ENCODE measurements at regions of chr19 and their contacts with region 1.

Region 1: DNA sequence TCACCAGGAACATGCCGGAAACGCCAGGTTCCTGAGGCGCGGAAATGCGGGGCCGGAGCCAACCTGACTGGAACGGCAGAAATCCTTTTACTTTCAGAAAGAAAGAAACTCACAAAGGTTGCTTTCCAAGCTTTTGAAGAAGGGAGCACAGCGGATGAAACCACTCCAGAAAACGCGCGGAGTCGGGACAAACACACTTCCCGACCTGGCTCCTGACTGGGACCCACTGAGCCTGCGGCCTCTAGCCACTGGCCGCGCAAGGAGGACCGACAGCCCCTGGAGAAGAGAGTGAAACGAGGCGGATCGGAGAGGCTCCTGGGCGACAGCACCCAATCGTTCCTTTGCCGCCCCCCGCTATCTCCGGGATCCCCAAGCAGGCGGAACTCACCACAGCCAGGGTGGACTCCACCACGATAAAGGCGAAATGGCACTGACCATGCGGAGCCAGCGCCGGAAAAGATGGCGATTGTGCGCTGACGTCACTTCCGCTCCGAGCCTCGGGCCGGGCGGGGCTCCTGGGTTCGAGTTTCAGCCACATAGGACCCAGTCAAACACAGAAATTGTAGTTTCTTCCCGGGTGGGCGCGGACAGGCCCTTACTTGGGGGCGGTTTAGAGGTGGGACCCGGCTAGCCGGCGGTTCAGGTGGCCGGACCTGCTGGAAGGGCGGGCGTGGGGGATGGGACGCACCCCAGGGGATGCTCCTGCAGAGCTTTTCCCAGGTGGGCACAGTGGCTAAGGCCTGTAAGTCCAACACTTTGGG is at the start of gene ZNF121:
- DNase-seq: peak; percentile 59 to 63
- ATAC-seq: peak; percentile 95 to 98
- H3K4me3 ChIP-seq: peak within 1 kb of the TSS; percentile 67 to 93 (median 82)
- H3K27ac ChIP-seq: peak within 1 kb of the TSS; percentile 82 to 93 (median 90)
- H3K4me1 ChIP-seq: peaks cover 8 to 10% of the 10 kb centered on the region in 2 donors
- H3K27me3 ChIP-seq: peaks cover 0 to 11% (median 0%) of the 10 kb centered on the region in 3 donors
- CTCF ChIP-seq: no peak
- POLR2A ChIP-seq: peak; percentile 41 to 49
- total RNA-seq, gene ZNF121: 11.2 to 21.9 (median 14.6) TPM

Region 2: DNA sequence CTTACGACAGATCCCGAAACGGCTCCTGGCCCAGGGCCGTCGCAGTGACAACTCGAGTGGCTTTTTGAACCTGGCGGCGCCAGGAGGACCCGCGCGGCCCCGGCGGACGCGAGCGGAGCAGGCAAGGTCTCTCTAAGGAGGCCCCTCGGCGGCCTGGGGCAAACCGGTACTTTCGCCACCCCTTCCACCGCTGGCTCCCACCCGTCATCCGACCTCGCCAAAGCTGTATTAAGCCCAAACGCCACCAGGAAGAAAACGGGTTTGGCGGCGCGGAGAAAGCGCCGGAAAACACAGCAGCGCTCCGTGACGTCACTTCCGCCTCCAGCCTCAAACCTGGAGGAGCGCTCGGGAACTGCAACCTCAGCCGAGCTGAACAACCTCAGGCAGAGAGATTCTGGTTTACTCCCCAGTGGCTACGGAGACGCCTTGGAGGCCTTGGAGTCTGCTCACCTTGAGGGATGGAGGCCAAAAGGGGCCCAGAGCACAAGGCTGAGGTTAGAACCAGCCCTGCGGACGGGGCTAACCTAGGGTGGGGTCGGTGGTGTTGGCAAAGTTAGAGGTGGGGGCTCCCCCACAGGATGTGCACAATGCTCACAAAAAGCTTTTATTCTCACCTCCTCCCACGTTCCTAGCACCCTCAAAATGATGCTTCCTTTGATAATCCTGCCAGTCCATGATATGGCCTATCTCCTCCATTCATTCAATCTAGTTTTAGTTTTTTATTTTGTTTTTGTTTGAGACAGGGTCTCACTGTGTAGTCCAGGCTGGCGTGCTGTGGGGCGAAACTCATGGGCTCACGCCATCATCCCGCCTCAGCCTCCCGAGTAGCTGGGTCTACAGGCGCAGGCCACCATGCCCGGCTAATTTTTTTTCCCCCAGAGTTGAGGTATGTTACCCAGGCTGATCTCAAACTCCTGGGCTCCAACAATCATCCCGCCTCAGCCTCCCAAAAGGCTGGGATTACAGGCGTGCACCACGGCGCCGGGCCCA is 148.7 kb before region 1 on chr19 and contains the start of gene ZNF266:
- in situ Hi-C with region 1: no loop called
- intact Hi-C with region 1: loop called (anchors 10 kb)
- DNase-seq: peak; percentile 73 to 77
- ATAC-seq: peak; percentile 98 to 99
- H3K4me3 ChIP-seq: peak within 1 kb of the TSS; percentile 76 to 99 (median 90)
- H3K27ac ChIP-seq: peak within 1 kb of the TSS; percentile 82 to 95 (median 90)
- H3K4me1 ChIP-seq: peaks cover 17 to 20% of the 10 kb centered on the region in 2 donors
- H3K27me3 ChIP-seq: no peaks in the 10 kb centered on the region
- CTCF ChIP-seq: peak; percentile 63 to 86 (median 76)
- POLR2A ChIP-seq: peak in 1 of 2 donors; percentile 19
- total RNA-seq, gene ZNF266: 3.7 to 7.0 (median 5.3) TPM

Region 3: GRCh38 chr19:9621156-9622037 is 37.1 kb after region 1 on chr19 and contains the start of gene ZNF561:
- in situ Hi-C with region 1: no loop called
- intact Hi-C with region 1: loop called (anchors 1 kb)
- DNase-seq: peak; percentile 70
- ATAC-seq: peak; percentile 96 to 98
- H3K4me3 ChIP-seq: peak within 1 kb of the TSS; percentile 70 to 96 (median 86)
- H3K27ac ChIP-seq: peak within 1 kb of the TSS; percentile 82 to 92 (median 90)
- H3K4me1 ChIP-seq: peaks cover 14 to 22% of the 10 kb centered on the region in 2 donors
- H3K27me3 ChIP-seq: no peaks in the 10 kb centered on the region
- CTCF ChIP-seq: no peak
- POLR2A ChIP-seq: no peak
- total RNA-seq, gene ZNF561: 8.7 to 17.5 (median 14.4) TPM

Region 4: GRCh38 chr19:9768175-9769112 is 184.2 kb after region 1 on chr19 and contains the start of gene ZNF846:
- in situ Hi-C with region 1: no loop called
- intact Hi-C with region 1: loop called (anchors 1 kb)
- DNase-seq: peak; percentile 78 to 87
- ATAC-seq: peak; percentile 99 to 100
- H3K4me3 ChIP-seq: peak within 1 kb of the TSS; percentile 59 to 92 (median 88)
- H3K27ac ChIP-seq: peak within 1 kb of the TSS; percentile 85 to 91 (median 91)
- H3K4me1 ChIP-seq: peaks cover 7 to 12% of the 10 kb centered on the region in 2 donors
- H3K27me3 ChIP-seq: no peaks in the 10 kb centered on the region
- CTCF ChIP-seq: no peak
- POLR2A ChIP-seq: peak; percentile 29 to 42
- total RNA-seq, gene ZNF846: 0.63 to 5.0 (median 2.1) TPM